HepG2 (cell line): ENCODE measurements at regions of chr2 and their contacts with region 1.

Region 1: GRCh38 chr2:145822892-145823534 is 1303.1 kb upstream of the ZEB2 start:
- DNase-seq: peak; percentile 98
- ATAC-seq: peak; percentile 96
- H3K4me3 ChIP-seq: peak overlapping the region in 2 of 3 experiments; percentile 11 to 13; a peak in 2 of 6 replicates
- H3K27ac ChIP-seq: peak overlapping the region; percentile 89
- H3K4me1 ChIP-seq: peaks cover 45% of the 10 kb centered on the region
- H3K27me3 ChIP-seq: no peaks in the 10 kb centered on the region
- CTCF ChIP-seq: no peak
- EP300 ChIP-seq: peak; percentile 82 to 99
- POLR2A ChIP-seq: no peak
- RAD21 ChIP-seq: 0 out of 2 replicates have a peak, but pooled peaks have one; percentile 31

Region 2: GRCh38 chr2:145752091-145752806 is 70.8 kb before region 1 on chr2:
- CTCF ChIA-PET with region 1: no interaction called
- POLR2A ChIA-PET with region 1: interaction called, 31 read pairs
- in situ Hi-C with region 1: loop called (anchors 5 kb)
- intact Hi-C with region 1: loop called (anchors 2 kb)
- DNase-seq: peak; percentile 93
- ATAC-seq: peak; percentile 75
- H3K4me3 ChIP-seq: no peak overlapping the region
- H3K27ac ChIP-seq: peak overlapping the region; percentile 78
- H3K4me1 ChIP-seq: peaks cover 63% of the 10 kb centered on the region
- H3K27me3 ChIP-seq: no peaks in the 10 kb centered on the region
- CTCF ChIP-seq: peak; percentile 88
- EP300 ChIP-seq: peak in 1 of 2 experiments; percentile 44; a peak in 1 of 4 replicates
- POLR2A ChIP-seq: no peak
- RAD21 ChIP-seq: peak; percentile 83

Region 3: DNA sequence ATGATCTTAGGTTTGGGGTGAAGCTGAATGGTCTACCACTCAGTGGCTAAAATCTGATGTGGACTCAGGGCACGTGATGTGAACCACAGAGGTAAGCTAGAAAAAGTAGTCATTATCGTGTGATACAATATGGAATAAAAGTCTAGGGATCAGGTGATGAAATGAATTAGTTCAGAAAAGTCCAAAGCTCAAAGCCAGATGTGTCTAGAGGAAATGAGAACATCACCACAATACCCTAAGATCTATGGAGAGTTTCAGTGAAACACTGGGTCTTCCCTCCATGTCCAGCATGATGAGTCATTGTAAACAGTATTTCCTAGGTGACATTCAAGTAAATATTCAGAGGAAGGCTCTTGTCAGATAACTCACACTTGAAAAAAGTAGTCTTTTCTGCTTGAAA is 45.7 kb before region 1 on chr2:
- CTCF ChIA-PET with region 1: no interaction called
- POLR2A ChIA-PET with region 1: interaction called, 5 read pairs
- in situ Hi-C with region 1: no loop called
- intact Hi-C with region 1: loop called (anchors 2 kb)
- DNase-seq: peak; percentile 88
- ATAC-seq: peak; percentile 96
- H3K4me3 ChIP-seq: no peak overlapping the region
- H3K27ac ChIP-seq: peak overlapping the region; percentile 52
- H3K4me1 ChIP-seq: peaks cover 23% of the 10 kb centered on the region
- H3K27me3 ChIP-seq: no peaks in the 10 kb centered on the region
- CTCF ChIP-seq: no peak
- EP300 ChIP-seq: peak in 1 of 2 experiments; percentile 88; a peak in 1 of 4 replicates
- POLR2A ChIP-seq: no peak
- RAD21 ChIP-seq: no peak

Region 4: DNA sequence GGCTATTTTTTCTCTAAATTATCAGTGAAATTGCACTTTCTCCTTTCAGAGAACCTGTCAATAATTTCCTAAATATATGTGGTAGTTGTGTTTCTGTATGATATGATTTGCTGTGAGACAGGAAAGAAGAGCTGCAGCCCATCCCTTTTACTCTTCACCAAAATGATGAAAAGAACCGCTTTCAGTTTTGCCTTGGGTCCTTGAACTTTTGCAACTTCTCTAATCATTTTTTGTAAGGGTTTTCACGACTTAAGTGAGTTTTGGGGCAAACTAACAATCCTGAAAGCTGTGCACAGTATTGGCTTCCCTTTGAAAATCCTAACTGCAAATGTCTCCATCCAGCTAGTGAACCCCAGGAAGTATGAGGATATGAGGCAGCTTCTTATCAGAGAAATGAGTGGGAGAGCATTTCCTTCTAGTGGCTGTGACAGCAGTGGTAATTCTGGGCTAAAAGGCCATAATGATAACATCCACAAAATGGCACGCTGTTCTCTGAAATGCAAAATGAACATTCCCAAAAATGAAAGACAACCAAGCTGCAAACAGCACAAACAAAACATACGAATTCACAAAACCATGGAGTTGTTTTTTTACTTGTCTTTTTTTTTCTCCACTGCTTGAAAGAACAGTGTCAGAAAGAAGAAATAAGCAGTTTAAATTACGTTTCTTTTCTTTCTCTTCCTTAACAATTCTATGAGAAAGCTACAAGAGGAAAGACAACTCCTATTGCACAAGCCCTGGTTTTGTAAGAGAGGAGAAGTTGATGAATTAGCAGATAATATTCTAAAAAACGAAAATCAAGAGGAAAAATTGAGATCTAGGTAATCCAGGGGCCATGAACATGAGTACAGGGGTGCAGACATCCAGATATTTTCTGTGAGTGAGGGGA is 11.5 kb before region 1 on chr2:
- CTCF ChIA-PET with region 1: no interaction called
- POLR2A ChIA-PET with region 1: interaction called, 8 read pairs
- in situ Hi-C with region 1: no loop called
- intact Hi-C with region 1: loop called (anchors 1 kb)
- DNase-seq: no peak
- ATAC-seq: no peak
- H3K4me3 ChIP-seq: no peak overlapping the region
- H3K27ac ChIP-seq: no peak overlapping the region
- H3K4me1 ChIP-seq: peaks cover 11% of the 10 kb centered on the region; the same call in 1 of the 2 replicates
- H3K27me3 ChIP-seq: no peaks in the 10 kb centered on the region
- CTCF ChIP-seq: no peak
- EP300 ChIP-seq: no peak
- POLR2A ChIP-seq: no peak
- RAD21 ChIP-seq: no peak

Region 5: DNA sequence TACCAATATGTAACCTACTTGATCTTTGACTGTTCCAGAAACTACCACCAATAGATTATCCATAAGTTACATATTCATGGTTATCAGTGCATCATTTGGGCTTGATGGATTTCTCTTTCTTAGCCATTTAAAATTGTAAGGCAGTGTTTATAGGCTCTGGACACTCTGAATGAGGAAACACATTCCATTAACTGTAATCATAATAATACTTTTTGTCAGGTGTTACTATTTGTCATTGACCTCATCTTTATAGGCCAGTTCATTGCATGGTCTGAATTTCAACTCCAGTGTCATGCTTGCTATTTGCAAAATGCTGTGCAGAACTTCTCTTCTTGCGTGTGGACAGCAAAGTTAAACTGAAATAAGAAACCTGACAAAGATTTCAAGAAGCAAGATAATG is 37.1 kb after region 1 on chr2:
- CTCF ChIA-PET with region 1: no interaction called
- POLR2A ChIA-PET with region 1: no interaction called
- in situ Hi-C with region 1: no loop called
- intact Hi-C with region 1: loop called (anchors 1 kb)
- DNase-seq: no peak
- ATAC-seq: no peak
- H3K4me3 ChIP-seq: no peak overlapping the region
- H3K27ac ChIP-seq: no peak overlapping the region
- H3K4me1 ChIP-seq: no peaks in the 10 kb centered on the region
- H3K27me3 ChIP-seq: no peaks in the 10 kb centered on the region
- CTCF ChIP-seq: no peak
- EP300 ChIP-seq: no peak
- POLR2A ChIP-seq: no peak
- RAD21 ChIP-seq: no peak